Activated CD4-positive, alpha-beta memory T cell treated with anti-CD3 and anti-CD28 coated beads, Interleukin-2, amount 10 ng/mL, durations not matched to agents 7 days and 5 days (primary cell): ENCODE measurements at regions of chr2 and their contacts with region 1.

Region 1: DNA sequence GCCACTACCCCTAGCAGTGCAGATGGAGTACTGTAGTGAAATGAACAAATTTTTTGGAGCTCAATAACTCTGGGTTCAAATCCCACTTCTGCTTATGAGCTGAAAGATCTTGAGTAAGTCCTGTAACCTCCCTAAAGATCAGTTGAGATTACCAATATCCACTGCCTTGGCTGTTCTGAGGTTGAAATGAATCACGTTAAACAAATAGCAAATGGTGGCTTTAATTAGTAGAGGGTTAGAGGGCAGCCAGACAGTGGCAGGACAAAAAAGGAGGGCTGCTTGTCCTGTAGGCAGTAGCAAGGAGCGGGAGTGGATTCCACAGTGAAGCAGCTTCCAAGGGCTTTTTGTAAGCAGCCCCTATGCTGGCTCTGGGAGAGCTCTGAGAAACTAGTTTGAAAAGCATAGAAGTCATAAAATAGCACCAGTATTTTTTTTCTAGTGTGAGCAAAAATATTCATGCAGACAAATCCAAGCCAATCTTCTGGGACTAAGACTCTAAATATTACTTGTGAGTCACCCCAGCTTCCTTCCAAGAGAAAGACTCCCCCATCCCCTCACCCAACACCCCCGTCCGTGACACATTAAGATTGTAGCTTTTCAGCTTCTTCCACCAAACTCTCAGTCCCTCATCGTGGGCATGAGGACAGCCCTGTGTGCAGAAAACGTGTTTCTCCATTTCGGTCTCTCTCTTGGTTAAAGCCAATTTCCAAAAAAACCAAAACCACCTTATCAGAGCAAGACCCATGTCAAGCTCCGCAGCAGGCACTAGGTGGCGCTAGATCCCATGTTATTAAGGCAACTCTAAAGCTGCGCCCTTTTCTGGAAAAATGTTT is 123.5 kb upstream of the LGALSL start:
- DNase-seq: peak; percentile 80
- H3K4me3 Mint-ChIP-seq: no peak overlapping the region
- H3K27ac Mint-ChIP-seq: no peak overlapping the region
- H3K4me1 Mint-ChIP-seq: peaks cover 52% of the 10 kb centered on the region
- H3K27me3 Mint-ChIP-seq: peaks cover 5% of the 10 kb centered on the region

Region 2: GRCh38 chr2:64052468-64053241 is 277.8 kb before region 1 on chr2:
- CTCF ChIA-PET with region 1: interaction called, 194 read pairs
- POLR2A ChIA-PET with region 1: interaction called, 34 read pairs
- DNase-seq: peak; percentile 20
- H3K4me3 Mint-ChIP-seq: no peak overlapping the region
- H3K27ac Mint-ChIP-seq: no peak overlapping the region
- H3K4me1 Mint-ChIP-seq: peaks cover 47% of the 10 kb centered on the region
- H3K27me3 Mint-ChIP-seq: no peaks in the 10 kb centered on the region

Region 3: GRCh38 chr2:64214281-64215115 is 116.0 kb before region 1 on chr2:
- CTCF ChIA-PET with region 1: interaction called, 6 read pairs
- POLR2A ChIA-PET with region 1: interaction called, 57 read pairs
- DNase-seq: peak; percentile 38
- H3K4me3 Mint-ChIP-seq: peak overlapping the region; percentile 43
- H3K27ac Mint-ChIP-seq: peak overlapping the region; percentile 95
- H3K4me1 Mint-ChIP-seq: peaks cover 52% of the 10 kb centered on the region
- H3K27me3 Mint-ChIP-seq: no peaks in the 10 kb centered on the region

Region 4: GRCh38 chr2:64488050-64488974 is 157.8 kb after region 1 on chr2:
- CTCF ChIA-PET with region 1: interaction called, 243 read pairs
- POLR2A ChIA-PET with region 1: interaction called, 15 read pairs
- DNase-seq: peak; percentile 80
- H3K4me3 Mint-ChIP-seq: no peak overlapping the region
- H3K27ac Mint-ChIP-seq: no peak overlapping the region
- H3K4me1 Mint-ChIP-seq: peaks cover 26% of the 10 kb centered on the region
- H3K27me3 Mint-ChIP-seq: peaks cover 11% of the 10 kb centered on the region

Region 5: DNA sequence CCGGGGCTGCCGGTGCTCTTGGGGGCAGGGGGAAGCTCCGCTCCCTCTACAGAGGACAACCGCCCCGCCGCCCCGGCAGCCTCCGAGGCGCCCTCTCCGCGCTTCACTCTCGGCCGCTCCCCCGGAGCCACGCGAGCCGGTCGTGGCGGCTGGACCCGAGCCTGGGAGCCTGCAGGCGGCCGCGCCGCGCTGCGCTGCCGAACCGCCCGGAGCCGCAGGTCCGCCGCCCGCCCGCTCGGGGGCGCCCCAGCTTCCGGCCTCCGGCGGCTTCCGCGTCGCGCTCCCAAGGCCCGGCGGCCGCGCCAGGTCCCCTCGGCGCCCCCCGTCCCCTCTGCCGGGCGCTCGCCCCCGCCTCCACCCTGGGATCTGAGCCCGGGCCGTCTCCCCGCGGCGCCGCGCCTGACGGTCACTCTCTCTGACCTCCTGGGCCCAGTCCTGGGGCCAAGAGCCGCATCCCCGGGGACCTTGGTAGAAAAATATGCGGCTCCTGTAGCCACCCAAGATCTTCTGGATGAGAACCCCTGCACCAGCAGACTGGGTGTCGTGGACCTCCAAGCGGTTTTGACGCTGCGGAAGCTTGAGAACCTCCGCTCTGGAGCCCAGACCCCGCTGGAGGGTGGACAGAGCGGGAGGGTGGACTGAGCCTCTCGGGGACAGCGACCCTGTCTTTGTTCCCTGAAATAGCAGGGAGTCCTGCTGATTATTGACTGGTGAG is 278.9 kb after region 1 on chr2:
- CTCF ChIA-PET with region 1: interaction called, 17 read pairs
- POLR2A ChIA-PET with region 1: interaction called, 5 read pairs
- DNase-seq: peak; percentile 73
- H3K4me3 Mint-ChIP-seq: peak overlapping the region; percentile 66
- H3K27ac Mint-ChIP-seq: no peak overlapping the region
- H3K4me1 Mint-ChIP-seq: peaks cover 29% of the 10 kb centered on the region
- H3K27me3 Mint-ChIP-seq: peaks cover 12% of the 10 kb centered on the region

Region 6: GRCh38 chr2:64873472-64873924 is 543.0 kb after region 1 on chr2:
- CTCF ChIA-PET with region 1: interaction called, 15 read pairs
- POLR2A ChIA-PET with region 1: no interaction called
- DNase-seq: peak; percentile 80
- H3K4me3 Mint-ChIP-seq: no peak overlapping the region
- H3K27ac Mint-ChIP-seq: no peak overlapping the region
- H3K4me1 Mint-ChIP-seq: peaks cover 7% of the 10 kb centered on the region
- H3K27me3 Mint-ChIP-seq: peaks cover 13% of the 10 kb centered on the region